Ovary (tissue), 10 donors: ENCODE measurements at regions of chr18 and their contacts with region 1.

Region 1: DNA sequence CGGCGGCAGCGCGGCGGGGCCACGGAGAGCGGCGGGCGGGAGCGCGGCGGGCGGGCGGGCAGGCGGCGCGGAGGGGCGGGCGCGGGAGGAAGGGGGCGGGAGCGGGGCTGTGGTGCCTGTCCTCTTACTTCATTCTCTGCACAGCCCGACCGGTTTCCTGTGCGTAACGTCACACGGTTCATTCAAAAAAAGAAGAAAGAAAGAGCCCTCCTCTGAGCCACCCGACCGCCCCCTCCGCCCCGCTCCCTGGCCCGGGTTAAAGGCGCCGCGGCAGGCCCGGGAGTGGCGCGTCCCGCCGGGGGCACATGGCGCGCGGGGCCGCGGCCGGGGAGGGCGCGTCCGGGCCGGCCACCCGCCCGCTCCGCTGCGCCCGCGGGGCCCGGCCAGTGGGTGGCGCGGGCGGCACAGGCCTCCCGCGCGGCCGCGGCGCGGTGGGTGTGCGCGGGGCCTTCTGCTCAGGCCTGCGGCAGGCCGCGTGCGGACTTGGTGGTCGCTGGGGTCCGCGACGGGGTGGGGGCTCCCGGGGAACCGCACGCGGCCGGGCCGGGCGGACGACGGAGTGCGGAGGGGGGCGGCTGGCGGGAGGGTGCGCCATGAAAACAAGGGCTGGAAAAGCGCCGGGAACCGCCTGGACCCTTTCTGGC is 599 bp upstream of the BCL2 start:
- DNase-seq: peak; percentile 79 to 84 (median 81)
- H3K4me3 ChIP-seq: peak overlapping the region; percentile 73
- H3K27ac ChIP-seq: peak overlapping the region; percentile 79 to 86
- H3K4me1 ChIP-seq: peaks cover 3% of the 10 kb centered on the region
- H3K27me3 ChIP-seq: no peaks in the 10 kb centered on the region
- CTCF ChIP-seq: peak in 2 of 3 donors; percentile 7 to 35
- EP300 ChIP-seq: no peak
- POLR2A ChIP-seq: no peak

Region 2: DNA sequence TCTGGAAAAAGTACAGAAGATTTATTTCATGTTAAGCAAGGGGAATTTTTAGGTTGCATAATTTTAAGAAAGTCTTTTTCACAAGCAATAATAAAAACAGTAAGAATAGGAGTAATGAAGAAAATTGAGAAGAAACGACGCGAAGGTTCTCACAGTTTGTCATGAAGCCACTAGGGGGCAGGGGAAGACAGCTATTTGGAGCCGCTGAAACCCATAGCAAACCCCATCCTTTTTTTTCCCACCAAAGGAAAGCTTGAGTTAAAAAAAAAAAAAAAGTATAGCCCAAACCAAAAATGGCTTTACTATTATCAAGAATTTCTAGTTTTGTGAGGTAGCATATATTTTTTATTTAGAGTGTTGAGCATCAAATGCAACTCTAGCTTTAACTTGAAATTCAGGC is 303.9 kb before region 1 on chr18:
- intact Hi-C with region 1: loop called in 2 of 4 experiments (anchors 5 kb)
- DNase-seq: peak in 4 of 5 donors; percentile 35 to 62 (median 48)
- H3K4me3 ChIP-seq: no peak overlapping the region
- H3K27ac ChIP-seq: no peak overlapping the region
- H3K4me1 ChIP-seq: no peaks in the 10 kb centered on the region
- H3K27me3 ChIP-seq: no peaks in the 10 kb centered on the region
- CTCF ChIP-seq: peak; percentile 56 to 80 (median 57)
- EP300 ChIP-seq: no peak
- POLR2A ChIP-seq: no peak

Region 3: GRCh38 chr18:63131106-63131958 is 188.8 kb before region 1 on chr18:
- intact Hi-C with region 1: loop called (anchors 2 to 5 kb)
- DNase-seq: peak in 4 of 5 donors; percentile 53 to 80 (median 62)
- H3K4me3 ChIP-seq: no peak overlapping the region
- H3K27ac ChIP-seq: peak overlapping the region in 1 of 2 donors; percentile 47
- H3K4me1 ChIP-seq: peaks cover 2% of the 10 kb centered on the region
- H3K27me3 ChIP-seq: no peaks in the 10 kb centered on the region
- CTCF ChIP-seq: peak; percentile 27 to 81 (median 76)
- EP300 ChIP-seq: no peak
- POLR2A ChIP-seq: no peak

Region 4: GRCh38 chr18:63237881-63238667 is 82.1 kb before region 1 on chr18:
- intact Hi-C with region 1: loop called in 1 of 4 experiments (anchors 5 kb)
- DNase-seq: peak in 2 of 5 donors; percentile 37 to 60
- H3K4me3 ChIP-seq: peak overlapping the region; percentile 2
- H3K27ac ChIP-seq: peak overlapping the region; percentile 41 to 76
- H3K4me1 ChIP-seq: peaks cover 15% of the 10 kb centered on the region
- H3K27me3 ChIP-seq: no peaks in the 10 kb centered on the region
- CTCF ChIP-seq: no peak
- EP300 ChIP-seq: no peak
- POLR2A ChIP-seq: no peak

Region 5: DNA sequence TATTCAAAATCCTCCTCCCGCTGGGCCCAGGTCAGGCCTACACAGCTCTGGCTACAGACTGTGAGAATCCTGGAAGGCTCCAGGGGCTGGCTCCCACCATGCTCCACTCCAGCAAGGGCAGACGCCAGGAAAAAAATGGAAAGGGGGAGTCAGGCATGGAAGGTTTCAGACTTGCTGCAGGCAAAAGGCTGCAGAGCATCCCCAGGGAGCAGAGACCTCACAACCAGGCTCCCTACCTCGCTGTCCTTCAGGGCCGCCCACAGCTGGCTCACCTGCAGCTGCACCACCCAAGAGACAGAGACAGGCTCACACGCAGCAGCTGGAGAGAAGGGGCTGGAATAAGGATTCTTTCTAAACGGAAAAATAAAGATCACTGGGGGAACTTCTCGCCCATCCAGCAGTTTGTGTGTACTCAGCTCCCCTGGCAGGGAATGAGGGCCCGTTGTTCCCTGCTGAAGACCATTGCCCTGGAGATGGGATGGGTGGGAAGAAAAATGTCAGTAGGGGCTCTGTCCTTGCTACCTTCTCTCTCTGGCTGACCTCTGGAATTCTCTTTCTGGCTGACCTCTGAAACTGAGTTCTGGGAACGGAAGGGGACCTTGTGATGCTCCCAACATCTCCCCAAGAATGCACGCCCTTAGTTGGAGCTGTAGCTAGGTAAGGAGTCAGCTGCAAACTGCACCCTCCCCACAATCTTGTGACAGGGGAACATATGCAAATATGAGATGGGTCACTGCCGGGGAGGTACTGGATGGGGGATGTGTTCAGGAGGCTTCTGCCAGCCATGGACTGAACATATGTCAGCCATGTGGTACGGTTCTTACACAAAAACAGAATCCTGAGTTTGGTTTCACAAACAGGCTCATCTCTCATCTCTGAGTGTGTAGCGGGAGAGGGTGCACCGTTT is 35.1 kb before region 1 on chr18:
- intact Hi-C with region 1: loop called in 1 of 4 experiments (anchors 5 kb)
- DNase-seq: no peak
- H3K4me3 ChIP-seq: no peak overlapping the region
- H3K27ac ChIP-seq: peak overlapping the region in 1 of 2 donors; percentile 45
- H3K4me1 ChIP-seq: peaks cover 37% of the 10 kb centered on the region
- H3K27me3 ChIP-seq: no peaks in the 10 kb centered on the region
- CTCF ChIP-seq: no peak
- EP300 ChIP-seq: no peak
- POLR2A ChIP-seq: no peak

Region 6: GRCh38 chr18:63523660-63524059 is 203.5 kb after region 1 on chr18:
- intact Hi-C with region 1: no loop called
- DNase-seq: no peak
- H3K4me3 ChIP-seq: no peak overlapping the region
- H3K27ac ChIP-seq: no peak overlapping the region
- H3K4me1 ChIP-seq: peaks cover under 1% of the 10 kb centered on the region
- H3K27me3 ChIP-seq: no peaks in the 10 kb centered on the region
- CTCF ChIP-seq: no peak
- EP300 ChIP-seq: no peak
- POLR2A ChIP-seq: no peak